Psoas muscle (tissue), 8 donors: ENCODE measurements at regions of chr3 and their contacts with region 1.

Region 1: GRCh38 chr3:64685800-64686445 is 1.9 kb downstream of the ADAMTS9 start:
- DNase-seq: peak; percentile 90 to 96
- ATAC-seq: peak; percentile 85 to 90 (median 88)
- H3K4me3 ChIP-seq: peak overlapping the region; percentile 78
- H3K27ac ChIP-seq: peak overlapping the region; percentile 92
- H3K4me1 ChIP-seq: peaks cover 4% of the 10 kb centered on the region
- H3K27me3 ChIP-seq: no peaks in the 10 kb centered on the region
- CTCF ChIP-seq: peak; percentile 36

Region 2: GRCh38 chr3:63193629-63194028 is 1492.3 kb before region 1 on chr3:
- intact Hi-C with region 1: no loop called
- DNase-seq: no peak
- ATAC-seq: no peak
- H3K4me3 ChIP-seq: no peak overlapping the region
- H3K27ac ChIP-seq: no peak overlapping the region
- H3K4me1 ChIP-seq: no peaks in the 10 kb centered on the region
- H3K27me3 ChIP-seq: no peaks in the 10 kb centered on the region
- CTCF ChIP-seq: peak; percentile 7

Region 3: GRCh38 chr3:64518950-64519349 is 167.0 kb before region 1 on chr3:
- intact Hi-C with region 1: no loop called
- DNase-seq: no peak
- ATAC-seq: no peak
- H3K4me3 ChIP-seq: no peak overlapping the region
- H3K27ac ChIP-seq: no peak overlapping the region
- H3K4me1 ChIP-seq: no peaks in the 10 kb centered on the region
- H3K27me3 ChIP-seq: no peaks in the 10 kb centered on the region
- CTCF ChIP-seq: no peak

Region 4: GRCh38 chr3:64533617-64534317 is 152.2 kb before region 1 on chr3:
- intact Hi-C with region 1: loop called (anchors 2 to 5 kb)
- DNase-seq: peak; percentile 82 to 93
- ATAC-seq: peak; percentile 97 to 98 (median 98)
- H3K4me3 ChIP-seq: peak overlapping the region; percentile 13
- H3K27ac ChIP-seq: no peak overlapping the region
- H3K4me1 ChIP-seq: no peaks in the 10 kb centered on the region
- H3K27me3 ChIP-seq: no peaks in the 10 kb centered on the region
- CTCF ChIP-seq: peak; percentile 90

Region 5: GRCh38 chr3:64728428-64728827 is 42.5 kb after region 1 on chr3:
- intact Hi-C with region 1: loop called (anchors 5 kb)
- DNase-seq: peak; percentile 15 to 67
- ATAC-seq: peak; percentile 81 to 96 (median 96)
- H3K4me3 ChIP-seq: no peak overlapping the region
- H3K27ac ChIP-seq: peak overlapping the region; percentile 76
- H3K4me1 ChIP-seq: peaks cover 26% of the 10 kb centered on the region
- H3K27me3 ChIP-seq: no peaks in the 10 kb centered on the region
- CTCF ChIP-seq: no peak

Region 6: DNA sequence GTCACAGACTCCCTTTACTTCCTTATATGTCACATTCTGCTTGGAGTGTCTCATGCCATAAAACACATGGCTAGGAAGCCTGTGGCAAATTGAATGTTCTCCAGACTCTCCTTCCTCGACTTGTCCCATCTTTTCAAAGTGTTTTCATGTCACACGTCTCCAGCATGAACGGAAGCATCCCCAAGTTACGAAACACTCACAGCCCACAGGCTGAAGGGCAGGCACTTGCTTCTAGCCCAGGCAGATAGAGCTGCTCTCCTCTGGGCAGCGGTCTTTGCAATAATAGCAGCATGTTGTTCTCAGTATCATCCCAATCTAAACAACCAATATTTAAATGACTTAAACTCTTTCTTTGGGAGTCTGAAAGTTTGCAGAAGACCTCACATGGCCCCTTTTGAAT is 87.2 kb after region 1 on chr3:
- intact Hi-C with region 1: no loop called
- DNase-seq: no peak
- ATAC-seq: peak in 1 of 4 donors; percentile 50
- H3K4me3 ChIP-seq: no peak overlapping the region
- H3K27ac ChIP-seq: no peak overlapping the region
- H3K4me1 ChIP-seq: peaks cover 8% of the 10 kb centered on the region
- H3K27me3 ChIP-seq: no peaks in the 10 kb centered on the region
- CTCF ChIP-seq: no peak

Region 7: GRCh38 chr3:64954995-64955636 is 269.2 kb after region 1 on chr3:
- intact Hi-C with region 1: loop called in 1 of 2 experiments (anchors 10 kb)
- DNase-seq: no peak
- ATAC-seq: peak in 1 of 4 donors; percentile 35
- H3K4me3 ChIP-seq: no peak overlapping the region
- H3K27ac ChIP-seq: no peak overlapping the region
- H3K4me1 ChIP-seq: peaks cover 12% of the 10 kb centered on the region
- H3K27me3 ChIP-seq: no peaks in the 10 kb centered on the region
- CTCF ChIP-seq: no peak

Region 8: GRCh38 chr3:65245133-65246063 is 559.5 kb after region 1 on chr3:
- intact Hi-C with region 1: loop called in 1 of 2 experiments (anchors 10 kb)
- DNase-seq: no peak
- ATAC-seq: no peak
- H3K4me3 ChIP-seq: no peak overlapping the region
- H3K27ac ChIP-seq: no peak overlapping the region
- H3K4me1 ChIP-seq: no peaks in the 10 kb centered on the region
- H3K27me3 ChIP-seq: no peaks in the 10 kb centered on the region
- CTCF ChIP-seq: peak; percentile 37